Activated B cell treated with CpG ODN at 0.5 μM for 24 hours (primary cell): ENCODE measurements at regions of chr3 and their contacts with region 1.

Region 1: DNA sequence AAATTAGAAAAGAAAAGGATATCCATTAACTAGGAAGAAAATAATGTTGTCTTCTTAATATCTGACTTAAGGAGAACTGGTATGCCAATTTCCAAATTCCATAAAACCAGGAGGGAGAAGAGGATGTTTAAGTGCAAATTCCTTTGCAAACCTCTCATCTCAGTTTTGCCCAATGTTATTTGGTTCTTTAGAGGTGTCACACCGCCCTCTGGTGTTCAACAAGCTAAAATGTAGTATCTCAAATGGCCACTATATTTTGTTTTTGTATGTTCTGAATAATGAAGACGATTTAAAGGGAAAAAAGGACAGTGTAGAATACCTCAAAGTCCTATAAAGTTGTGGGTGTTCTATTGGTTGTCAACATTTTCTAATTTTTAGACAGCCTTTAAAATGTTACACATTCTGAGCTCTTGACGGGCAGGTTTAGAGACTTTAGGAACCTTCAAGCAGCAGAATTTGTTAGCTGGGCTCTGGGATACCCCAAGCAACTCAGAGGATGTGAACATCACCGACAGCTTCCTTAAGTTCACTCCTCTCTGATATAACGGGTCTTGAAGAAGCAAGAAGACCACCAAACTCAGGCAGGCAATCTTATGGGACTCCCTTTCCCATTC is 458.3 kb downstream of the MFSD1 start:
- DNase-seq: no peak
- ATAC-seq: no peak
- H3K4me3 Mint-ChIP-seq: no peak overlapping the region
- H3K27ac Mint-ChIP-seq: no peak overlapping the region
- H3K4me1 Mint-ChIP-seq: no peaks in the 10 kb centered on the region
- H3K27me3 Mint-ChIP-seq: peaks cover 9% of the 10 kb centered on the region
- CTCF ChIP-seq: no peak

Region 2: GRCh38 chr3:158727206-158728060 is 532.7 kb before region 1 on chr3:
- CTCF ChIA-PET with region 1: interaction called, 3 read pairs
- POLR2A ChIA-PET with region 1: no interaction called
- intact Hi-C with region 1: loop called (anchors 2 kb)
- DNase-seq: no peak
- ATAC-seq: peak; percentile 62
- H3K4me3 Mint-ChIP-seq: no peak overlapping the region
- H3K27ac Mint-ChIP-seq: no peak overlapping the region
- H3K4me1 Mint-ChIP-seq: peaks cover 28% of the 10 kb centered on the region
- H3K27me3 Mint-ChIP-seq: no peaks in the 10 kb centered on the region
- CTCF ChIP-seq: peak; percentile 17

Region 3: DNA sequence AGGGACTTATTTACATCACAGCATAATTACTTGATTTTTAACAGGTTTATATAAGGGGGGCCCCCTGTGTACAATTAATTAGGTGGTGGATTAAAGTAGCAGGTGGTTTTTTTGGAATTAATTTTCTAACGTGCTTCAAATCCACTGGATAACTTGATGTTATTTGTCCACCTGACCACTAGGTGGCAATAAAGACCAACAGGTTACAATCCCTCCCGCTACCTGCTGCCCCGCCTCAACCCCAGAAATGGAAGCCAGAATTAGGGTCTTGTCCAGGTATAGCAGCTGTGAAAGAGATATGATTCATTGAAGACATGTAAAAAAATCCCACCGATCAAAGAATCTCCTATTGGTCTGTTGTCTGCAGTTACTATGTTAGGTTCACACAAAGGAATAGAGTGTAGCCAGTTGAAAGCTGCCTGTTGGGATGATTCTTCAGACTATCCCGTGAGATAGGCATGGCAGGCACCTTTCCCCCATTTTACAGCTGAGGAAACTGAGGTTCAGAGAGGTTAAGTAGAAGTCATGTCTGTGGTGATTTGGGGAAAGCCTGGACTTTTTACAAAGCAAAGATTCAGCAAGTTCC is 414.3 kb before region 1 on chr3:
- CTCF ChIA-PET with region 1: interaction called, 59 read pairs
- POLR2A ChIA-PET with region 1: no interaction called
- intact Hi-C with region 1: loop called (anchors 1 kb)
- DNase-seq: no peak
- ATAC-seq: peak; percentile 34
- H3K4me3 Mint-ChIP-seq: no peak overlapping the region
- H3K27ac Mint-ChIP-seq: no peak overlapping the region
- H3K4me1 Mint-ChIP-seq: peaks cover 3% of the 10 kb centered on the region
- H3K27me3 Mint-ChIP-seq: no peaks in the 10 kb centered on the region
- CTCF ChIP-seq: peak; percentile 29

Region 4: DNA sequence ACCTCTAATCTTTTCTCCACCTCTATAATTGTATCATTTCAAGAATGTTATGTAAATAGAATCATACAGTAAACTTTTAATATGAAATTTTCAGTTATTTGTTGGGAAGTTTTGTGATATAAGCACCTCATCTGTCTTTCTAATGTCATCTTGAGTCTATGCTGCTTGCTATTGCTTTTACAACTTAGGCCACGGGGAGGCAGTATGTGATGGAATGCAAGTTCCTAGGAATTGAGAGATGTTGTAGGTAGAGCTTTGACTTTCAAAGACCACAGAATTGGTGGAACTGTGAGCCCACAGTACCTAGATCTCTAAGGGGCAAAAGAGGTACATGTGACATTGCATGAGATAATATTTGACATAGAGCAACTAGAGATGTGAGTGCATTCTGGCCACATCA is 130.0 kb before region 1 on chr3:
- CTCF ChIA-PET with region 1: interaction called, 16 read pairs
- POLR2A ChIA-PET with region 1: no interaction called
- intact Hi-C with region 1: loop called (anchors 1 kb)
- DNase-seq: no peak
- ATAC-seq: no peak
- H3K4me3 Mint-ChIP-seq: no peak overlapping the region
- H3K27ac Mint-ChIP-seq: no peak overlapping the region
- H3K4me1 Mint-ChIP-seq: no peaks in the 10 kb centered on the region
- H3K27me3 Mint-ChIP-seq: peaks cover 4% of the 10 kb centered on the region
- CTCF ChIP-seq: no peak

Region 5: DNA sequence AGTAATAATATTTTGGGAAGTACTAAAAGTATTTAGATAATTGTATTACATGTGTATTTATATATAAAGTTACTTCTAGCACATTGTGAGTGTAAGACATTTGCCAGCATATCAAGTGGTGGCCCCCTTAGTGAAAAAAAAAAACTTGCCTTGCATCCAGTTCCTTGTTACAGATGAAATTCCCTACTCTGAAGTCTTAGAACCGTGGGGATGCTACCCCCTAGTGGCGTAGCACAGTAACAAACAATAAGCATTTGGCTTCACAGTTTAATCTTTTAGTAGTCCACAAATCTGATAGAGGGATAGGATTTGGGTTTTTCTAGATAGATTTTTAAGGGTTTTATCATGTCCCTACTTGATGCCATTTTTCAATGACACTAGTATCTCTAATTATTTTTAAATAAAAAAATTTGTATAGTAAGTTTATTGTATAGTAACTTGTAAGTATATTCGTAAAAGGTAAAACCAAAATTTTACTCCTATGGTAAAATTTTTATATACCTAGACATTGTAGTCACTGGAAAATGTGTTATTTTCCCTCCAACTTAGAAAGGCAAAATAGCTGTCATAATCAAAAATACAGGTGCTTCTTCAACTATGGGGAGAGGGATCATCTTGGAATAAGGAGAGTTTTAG is 1153.6 kb after region 1 on chr3:
- CTCF ChIA-PET with region 1: no interaction called
- POLR2A ChIA-PET with region 1: no interaction called
- intact Hi-C with region 1: loop called (anchors 1 kb)
- DNase-seq: peak; percentile 19
- ATAC-seq: peak; percentile 90
- H3K4me3 Mint-ChIP-seq: no peak overlapping the region
- H3K27ac Mint-ChIP-seq: no peak overlapping the region
- H3K4me1 Mint-ChIP-seq: peaks cover 1% of the 10 kb centered on the region
- H3K27me3 Mint-ChIP-seq: no peaks in the 10 kb centered on the region
- CTCF ChIP-seq: peak; percentile 98